Cardiac septum (tissue), 1 donor: ENCODE measurements at regions of chr5 and their contacts with region 1.

Region 1: DNA sequence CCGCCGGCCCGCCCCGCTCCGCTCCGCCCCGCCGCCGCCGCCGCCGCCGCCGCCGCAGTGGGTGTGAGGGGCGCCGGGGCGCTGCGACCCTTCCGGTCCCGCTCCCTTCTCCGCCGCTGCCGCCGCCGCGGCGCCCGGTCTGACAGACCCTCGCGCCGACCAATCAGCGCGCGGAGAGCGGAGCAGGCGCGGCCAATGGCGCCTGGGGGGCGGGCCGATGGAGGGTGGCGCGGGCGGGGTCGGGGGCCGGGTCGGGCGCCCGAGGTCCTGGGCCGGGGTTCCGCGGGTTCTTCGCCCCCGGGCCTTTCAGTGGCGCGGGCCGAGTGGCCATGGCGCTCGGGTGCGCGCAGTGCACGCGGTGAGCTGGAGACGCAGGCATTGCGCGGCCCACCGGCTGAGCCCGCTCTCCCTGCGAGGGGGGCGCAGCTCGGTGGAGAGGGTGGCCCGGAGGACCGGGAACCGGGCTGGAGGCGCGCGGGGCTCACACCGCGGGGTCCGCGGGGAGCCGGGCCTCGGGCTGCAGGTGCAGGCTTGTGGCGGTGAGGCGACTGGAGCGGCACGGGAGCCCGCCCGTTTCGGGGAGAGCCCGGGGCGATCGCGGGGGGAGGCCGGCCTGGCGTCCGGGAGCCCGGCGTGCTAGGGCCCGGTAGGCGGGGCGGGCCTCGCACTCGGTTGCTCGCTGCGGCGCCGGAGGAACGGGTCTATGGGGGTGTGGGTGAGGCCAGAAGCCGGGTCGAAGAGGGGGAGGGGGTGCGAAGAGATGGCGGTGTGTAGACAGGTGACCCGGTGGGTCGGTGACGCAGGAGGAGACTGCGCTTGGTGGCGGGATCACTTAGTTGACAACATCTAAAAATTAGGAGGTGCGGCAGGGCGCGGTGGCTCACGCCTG is at the start of gene MAPK9:
- DNase-seq: peak; percentile 93
- total RNA-seq, gene MAPK9: 37.5 TPM

Region 2: DNA sequence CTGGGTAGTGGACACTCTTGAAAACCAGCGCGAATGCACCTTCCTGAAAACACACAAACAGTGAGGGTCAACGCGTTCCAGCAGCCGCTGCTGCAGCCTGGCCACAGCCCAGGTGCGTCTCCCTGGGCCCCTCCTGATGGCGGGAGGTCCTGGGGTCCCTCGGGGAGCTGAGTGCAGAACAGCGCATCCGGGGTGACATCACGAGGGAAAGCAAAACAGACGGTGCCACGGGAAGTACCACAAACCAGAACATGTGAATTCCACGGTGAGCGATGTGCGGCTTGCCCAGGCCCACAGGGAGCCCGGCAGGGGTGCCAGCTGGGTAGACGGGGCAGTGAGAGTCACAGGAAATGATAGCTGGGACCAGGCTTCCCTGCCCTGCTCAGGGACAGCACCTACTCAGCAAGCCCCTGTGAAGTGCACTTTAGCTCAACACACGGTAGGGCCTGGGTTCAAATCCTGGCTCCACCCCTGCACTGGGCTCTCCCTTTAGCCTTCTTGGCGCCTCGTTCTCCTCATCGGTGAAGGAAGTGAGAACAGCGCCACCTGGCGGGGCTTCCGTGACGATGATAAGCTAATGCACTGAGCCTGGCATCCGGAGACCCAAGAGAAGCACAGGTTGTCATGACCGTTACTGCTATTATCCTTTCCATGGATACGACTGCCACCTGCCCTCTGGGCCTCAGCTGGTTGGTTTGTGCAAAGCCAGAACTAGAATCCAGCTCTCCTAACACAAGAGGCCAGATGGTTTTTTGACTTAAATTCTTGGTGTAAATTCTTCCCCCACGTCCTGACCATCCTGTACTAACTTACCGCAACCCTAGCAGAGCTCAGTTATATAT is 36.3 kb after region 1 on chr5:
- intact Hi-C with region 1: loop called (anchors 5 kb)
- DNase-seq: peak; percentile 90

Region 3: DNA sequence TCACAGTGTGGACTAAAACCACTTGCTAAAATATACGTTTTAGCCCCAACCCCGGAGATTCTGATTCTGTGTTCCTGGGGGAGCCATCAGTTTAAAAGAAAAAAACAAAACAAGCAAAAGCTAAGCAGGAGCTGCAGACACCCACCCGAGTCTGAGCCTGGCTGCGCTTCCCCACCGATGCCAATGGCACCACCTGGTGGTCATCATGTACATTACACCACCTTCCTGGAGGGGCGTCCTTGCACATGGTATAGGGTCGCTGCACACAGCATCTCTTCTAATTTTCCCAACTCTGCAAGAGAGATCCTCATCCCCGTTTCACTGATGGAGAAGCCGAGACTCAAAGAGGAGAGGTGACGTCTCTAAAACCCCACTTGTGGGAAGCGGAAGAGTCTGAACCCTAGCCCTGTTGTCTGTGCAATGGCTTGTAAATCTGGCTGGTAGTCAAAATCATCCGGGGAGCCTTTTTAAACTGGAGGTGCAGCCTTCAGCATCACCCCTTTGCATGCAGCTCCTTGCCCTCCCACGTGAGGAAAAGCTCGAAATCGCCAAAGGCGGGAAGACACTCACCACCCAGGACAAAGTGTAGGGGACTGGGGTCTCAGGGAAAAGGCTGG is 178.9 kb after region 1 on chr5:
- intact Hi-C with region 1: loop called (anchors 1 kb)
- DNase-seq: peak; percentile 85